Left cardiac atrium (tissue), 4 donors: ENCODE measurements at regions of chr6 and their contacts with region 1.

Region 1: GRCh38 chr6:145734486-145735355 is 599 bp downstream of the EPM2A start:
- DNase-seq: peak; percentile 95
- ATAC-seq: peak; percentile 90 to 95

Region 2: GRCh38 chr6:145704143-145704781 is 30.5 kb before region 1 on chr6:
- intact Hi-C with region 1: no loop called
- DNase-seq: no peak
- ATAC-seq: no peak

Region 3: DNA sequence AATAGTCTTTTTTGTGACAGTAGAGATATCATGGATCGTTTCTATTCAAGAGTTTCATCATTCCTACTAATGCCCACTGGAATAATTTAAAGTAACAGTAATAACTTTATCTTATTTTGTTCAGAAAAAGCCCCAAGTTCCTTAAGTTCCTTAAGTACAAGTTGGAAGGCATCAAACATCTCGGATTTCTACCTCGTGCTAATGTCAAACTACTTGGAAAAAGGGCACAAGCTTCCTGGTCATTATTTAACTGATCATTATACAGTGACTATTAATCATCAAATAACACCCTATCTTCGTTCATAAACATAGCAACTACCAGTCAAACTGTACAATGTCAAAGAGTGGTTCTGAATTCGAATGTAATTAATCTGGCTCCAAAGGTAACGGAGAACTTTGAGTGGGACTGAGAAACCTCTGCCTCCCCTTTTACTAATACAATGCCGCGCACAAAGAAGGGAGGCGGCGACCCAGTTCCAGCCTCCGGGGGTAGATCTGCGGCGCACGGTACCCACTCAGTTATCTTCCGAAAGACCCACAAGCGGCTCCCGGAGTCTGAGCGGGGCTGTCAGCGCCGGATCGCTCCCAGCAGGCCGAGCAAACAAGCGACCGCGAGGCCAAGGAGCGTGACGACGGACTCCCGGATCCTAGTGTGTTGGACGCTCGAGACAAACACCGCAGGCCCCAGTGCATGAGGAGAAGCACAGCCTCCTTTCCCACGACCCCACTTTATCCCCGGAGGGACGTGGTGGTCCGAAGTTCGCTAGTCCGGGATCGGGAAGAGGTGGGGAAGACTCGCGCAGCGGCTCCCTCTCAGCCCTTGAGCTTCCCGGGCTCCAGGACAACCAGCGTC is 228.7 kb after region 1 on chr6:
- intact Hi-C with region 1: loop called in 1 of 2 experiments (anchors 5 kb)
- DNase-seq: peak; percentile 48
- ATAC-seq: peak; percentile 53 to 63